Psoas muscle (tissue), 8 donors: ENCODE measurements at regions of chr15 and their contacts with region 1.

Region 1: DNA sequence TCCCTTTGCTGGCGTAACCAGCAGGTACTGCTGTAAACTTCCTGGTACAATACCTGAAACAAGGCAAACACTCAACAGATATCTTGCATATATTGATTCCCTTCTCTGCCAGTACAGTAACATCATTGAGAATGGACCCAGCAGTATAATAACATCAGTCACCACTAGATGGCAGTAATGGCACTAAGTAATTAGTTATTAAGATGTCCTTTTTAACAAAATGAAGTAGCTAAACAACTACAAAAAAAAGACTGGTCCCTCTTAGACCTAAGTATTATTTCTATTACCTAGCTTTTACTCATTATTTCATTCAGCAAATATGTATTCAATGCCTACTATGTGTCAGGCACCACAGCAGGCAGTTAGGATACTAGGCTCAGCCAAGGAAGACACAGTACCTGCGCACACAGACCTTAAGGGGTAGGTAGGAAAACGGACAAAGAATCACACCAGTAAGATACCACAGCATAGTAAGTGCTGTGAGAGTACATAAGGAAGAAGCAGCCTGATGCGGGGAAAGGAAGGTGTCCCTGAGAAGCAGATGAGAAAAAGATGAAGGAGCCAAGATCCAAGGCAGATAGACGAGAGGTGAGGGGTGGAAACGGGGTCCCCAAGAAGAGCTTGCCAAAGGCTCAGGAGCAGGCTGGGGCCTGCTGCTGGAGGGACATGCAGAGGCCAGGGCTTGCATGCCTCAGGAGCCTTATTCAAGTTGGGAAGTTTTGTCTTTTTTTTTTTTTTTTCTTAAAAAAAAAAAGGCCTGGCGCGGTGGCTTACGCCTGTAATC is 102.8 kb upstream of the CHD2 start:
- DNase-seq: no peak
- ATAC-seq: peak; percentile 53 to 78 (median 62)
- H3K4me3 ChIP-seq: no peak overlapping the region
- H3K27ac ChIP-seq: peak overlapping the region; percentile 72
- H3K4me1 ChIP-seq: peaks cover 20% of the 10 kb centered on the region
- H3K27me3 ChIP-seq: no peaks in the 10 kb centered on the region
- CTCF ChIP-seq: peak; percentile 77

Region 2: DNA sequence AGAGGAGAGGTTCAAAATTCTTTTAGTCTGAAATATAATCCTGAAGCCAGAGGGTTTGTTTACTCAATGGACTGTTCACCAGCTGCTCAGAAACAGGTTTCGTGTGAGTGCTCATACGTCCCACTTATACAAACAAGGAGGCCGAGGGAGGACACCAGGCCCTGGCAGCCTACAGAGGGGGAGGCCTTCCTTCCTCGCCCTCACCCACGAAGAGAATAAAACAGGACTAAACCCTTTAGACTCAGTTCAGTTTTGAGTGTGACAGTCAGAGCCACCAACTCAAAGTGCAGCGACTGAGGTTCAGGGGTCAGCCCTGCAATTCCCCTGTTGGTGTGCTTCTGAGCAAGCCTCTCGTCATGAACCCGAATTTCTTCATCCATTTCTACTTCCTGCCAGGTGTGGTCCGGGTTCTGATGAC is 159.1 kb before region 1 on chr15:
- intact Hi-C with region 1: no loop called
- DNase-seq: no peak
- ATAC-seq: peak; percentile 60 to 72 (median 64)
- H3K4me3 ChIP-seq: no peak overlapping the region
- H3K27ac ChIP-seq: peak overlapping the region; percentile 65
- H3K4me1 ChIP-seq: peaks cover 11% of the 10 kb centered on the region
- H3K27me3 ChIP-seq: no peaks in the 10 kb centered on the region
- CTCF ChIP-seq: no peak

Region 3: DNA sequence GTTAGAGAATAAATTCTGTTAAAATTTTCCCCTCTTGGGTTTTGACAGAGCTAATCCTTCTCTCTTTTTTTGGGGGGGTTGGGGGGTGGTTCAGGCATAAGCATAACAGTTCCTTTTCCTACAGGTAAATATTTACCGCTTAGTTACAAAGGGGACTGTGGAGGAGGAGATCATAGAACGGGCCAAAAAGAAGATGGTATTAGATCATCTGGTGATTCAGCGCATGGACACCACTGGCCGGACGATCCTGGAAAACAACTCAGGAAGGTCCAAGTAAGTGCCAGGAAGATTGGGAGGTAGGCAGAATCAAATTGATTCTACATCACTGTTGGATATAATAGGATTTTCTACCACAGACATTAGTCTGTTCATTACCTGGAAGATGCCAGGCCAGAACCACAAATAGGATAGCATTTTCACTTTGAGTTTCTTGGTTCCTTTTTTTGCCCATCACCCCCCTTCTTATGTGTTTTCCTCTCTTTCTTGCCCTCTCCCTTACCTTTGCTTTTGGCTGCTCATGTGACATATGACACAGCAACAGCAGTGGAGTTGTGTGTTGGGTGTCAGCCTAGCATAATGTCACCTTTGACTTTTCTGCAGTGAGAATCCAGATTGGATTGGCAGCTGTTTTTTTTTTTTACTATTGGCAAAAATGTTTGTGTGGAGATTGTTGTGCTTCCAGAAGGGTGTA is 181.8 kb after region 1 on chr15:
- intact Hi-C with region 1: loop called in 1 of 2 experiments (anchors 5 kb)
- DNase-seq: no peak
- ATAC-seq: peak; percentile 41 to 55 (median 52)
- H3K4me3 ChIP-seq: no peak overlapping the region
- H3K27ac ChIP-seq: peak overlapping the region; percentile 67
- H3K4me1 ChIP-seq: peaks cover 74% of the 10 kb centered on the region
- H3K27me3 ChIP-seq: no peaks in the 10 kb centered on the region
- CTCF ChIP-seq: no peak